ENCODE measurements at regions of chr5 and their contacts with region 1.

Region 1: DNA sequence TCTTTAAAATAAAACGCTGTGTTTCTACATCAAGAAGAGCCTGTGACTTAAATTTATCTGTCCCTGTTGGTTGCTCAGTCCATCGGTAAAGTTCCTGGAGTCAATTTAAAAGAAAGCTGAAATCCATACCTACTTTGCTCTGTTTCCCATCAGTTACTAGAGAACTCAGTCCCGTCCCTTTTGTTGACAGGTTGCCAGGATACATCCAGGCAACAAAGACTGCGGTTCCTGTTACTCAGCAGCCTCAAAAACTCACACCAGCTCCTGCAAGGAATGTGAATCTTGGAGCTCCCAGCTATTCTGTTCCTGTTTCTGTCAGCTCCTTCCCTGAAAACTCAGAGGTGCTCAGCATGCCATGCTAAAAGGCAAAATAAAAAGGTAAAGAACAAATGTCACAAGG is at the start of gene ZNF474:
- DNase-seq: peak; percentile 94
- H3K4me3 ChIP-seq: no peak within 1 kb of the TSS
- CTCF ChIP-seq: no peak

Region 2: DNA sequence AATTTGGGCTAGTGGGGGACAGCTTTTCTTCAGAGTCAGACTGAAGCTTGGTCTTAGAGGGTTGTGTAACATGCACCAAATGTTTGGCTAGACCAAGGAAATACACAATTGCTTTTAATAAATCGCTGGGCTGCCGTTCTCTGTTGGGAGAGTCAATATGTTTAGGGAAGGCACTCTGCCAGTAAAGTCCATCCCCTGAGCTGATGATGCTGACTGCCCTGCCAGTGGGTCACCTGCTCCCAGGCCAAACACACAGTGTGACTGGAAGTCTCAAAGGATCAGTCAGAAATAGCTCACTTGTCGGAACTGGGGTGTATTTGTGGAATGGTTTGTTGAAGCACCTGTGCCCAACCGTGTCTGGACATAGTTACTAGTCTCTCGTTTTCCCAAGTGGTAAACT is 17.8 kb before region 1 on chr5:
- CTCF ChIA-PET with region 1: interaction called, 10 read pairs
- POLR2A ChIA-PET with region 1: interaction called, 5 read pairs
- DNase-seq: no peak
- H3K4me3 ChIP-seq: no peak overlapping the region
- CTCF ChIP-seq: no peak

Region 3: GRCh38 chr5:122142480-122143164 is 13.3 kb after region 1 on chr5:
- CTCF ChIA-PET with region 1: interaction called, 11 read pairs
- POLR2A ChIA-PET with region 1: interaction called, 9 read pairs
- DNase-seq: no peak
- H3K4me3 ChIP-seq: no peak overlapping the region
- CTCF ChIP-seq: no peak

Region 4: GRCh38 chr5:122150215-122150614 is 20.9 kb after region 1 on chr5:
- CTCF ChIA-PET with region 1: interaction called, 27 read pairs
- POLR2A ChIA-PET with region 1: interaction called, 12 read pairs
- DNase-seq: no peak
- H3K4me3 ChIP-seq: no peak overlapping the region
- CTCF ChIP-seq: no peak